CD4-positive, alpha-beta T cell (primary cell): ENCODE measurements at regions of chr3 and their contacts with region 1.

Region 1: DNA sequence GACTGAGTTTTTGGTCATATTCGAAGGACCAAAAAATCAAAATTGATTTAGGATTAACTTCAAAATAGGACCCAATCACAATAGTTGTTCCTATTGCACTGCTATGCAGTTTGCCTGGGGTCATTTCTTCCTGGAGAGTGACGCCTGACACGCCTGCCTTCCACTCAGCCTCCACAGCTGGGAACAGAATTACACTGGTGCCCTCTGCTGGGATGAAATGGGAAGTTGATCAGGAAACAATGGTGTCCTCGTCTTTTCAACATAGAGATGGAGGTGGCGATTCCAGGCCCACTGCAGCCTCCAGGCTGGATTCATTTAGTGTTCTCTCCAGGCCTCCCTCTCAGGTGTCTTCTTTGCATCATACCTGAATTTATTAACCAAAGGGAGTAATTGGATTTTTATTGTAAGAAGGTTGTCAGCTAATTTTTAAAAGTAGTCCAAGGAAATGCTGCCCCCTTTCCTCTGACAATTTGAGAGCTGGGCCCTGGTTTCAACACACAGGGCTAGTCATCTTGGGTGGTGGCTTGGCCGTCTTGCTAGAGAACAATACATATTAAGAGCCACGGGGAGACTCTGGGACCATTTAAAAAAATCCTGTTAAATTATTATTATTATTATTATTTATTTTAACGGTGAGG is 69.7 kb downstream of the GAP43 start:
- DNase-seq: peak; percentile 37 to 79 (median 49)
- ATAC-seq: peak; percentile 86
- H3K4me3 ChIP-seq: no peak overlapping the region
- H3K4me3 Mint-ChIP-seq: no peak overlapping the region
- H3K27ac ChIP-seq: no peak overlapping the region
- H3K27ac Mint-ChIP-seq: no peak overlapping the region
- H3K4me1 ChIP-seq: no peaks in the 10 kb centered on the region
- H3K4me1 Mint-ChIP-seq: no peaks in the 10 kb centered on the region
- H3K27me3 ChIP-seq: no peaks in the 10 kb centered on the region
- H3K27me3 Mint-ChIP-seq: peaks cover 7% of the 10 kb centered on the region
- CTCF ChIP-seq: peak; percentile 85

Region 2: GRCh38 chr3:114389156-114389555 is 1303.8 kb before region 1 on chr3:
- CTCF ChIA-PET with region 1: no interaction called
- POLR2A ChIA-PET with region 1: no interaction called
- intact Hi-C with region 1: loop called (anchors 5 to 10 kb)
- DNase-seq: peak in 7 of 14 experiments; percentile 1 to 76 (median 32)
- ATAC-seq: peak; percentile 58
- H3K4me3 ChIP-seq: no peak overlapping the region
- H3K4me3 Mint-ChIP-seq: peak overlapping the region; percentile 35
- H3K27ac ChIP-seq: no peak overlapping the region
- H3K27ac Mint-ChIP-seq: peak overlapping the region; percentile 60
- H3K4me1 ChIP-seq: peaks cover 15% of the 10 kb centered on the region
- H3K4me1 Mint-ChIP-seq: peaks cover 51% of the 10 kb centered on the region
- H3K27me3 ChIP-seq: no peaks in the 10 kb centered on the region
- H3K27me3 Mint-ChIP-seq: no peaks in the 10 kb centered on the region
- CTCF ChIP-seq: no peak

Region 3: DNA sequence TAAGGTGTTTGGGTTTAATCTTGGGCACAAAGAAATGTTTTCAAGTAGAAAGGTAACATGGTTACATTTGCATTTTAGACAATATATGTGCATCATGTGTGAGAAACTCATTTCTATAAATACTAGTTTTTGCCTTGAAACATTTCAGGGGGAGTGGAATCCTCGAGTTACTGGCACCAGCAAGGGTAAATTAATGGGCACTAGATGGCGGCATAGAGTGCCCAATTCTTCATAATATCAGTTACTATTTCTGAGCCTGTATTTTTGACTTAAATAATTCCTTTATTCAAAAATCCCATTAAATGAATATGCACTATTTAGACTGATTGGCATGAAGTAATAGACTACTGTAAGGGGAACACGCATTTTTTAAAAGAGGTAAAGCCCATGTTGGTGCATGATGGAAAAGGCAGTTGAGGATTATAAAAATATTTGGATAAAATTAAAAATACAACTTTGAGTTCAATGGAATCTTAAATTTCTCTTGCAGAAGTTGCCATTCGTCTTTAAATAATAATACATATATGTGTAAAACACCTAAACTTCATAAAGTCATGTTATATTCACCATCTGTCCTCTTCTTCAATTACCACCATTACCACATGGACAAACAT is 652.2 kb before region 1 on chr3:
- CTCF ChIA-PET with region 1: interaction called, 3 read pairs
- POLR2A ChIA-PET with region 1: no interaction called
- intact Hi-C with region 1: loop called (anchors 1 to 2 kb)
- DNase-seq: peak in 13 of 14 experiments; percentile 3 to 66 (median 25)
- ATAC-seq: peak; percentile 60
- H3K4me3 ChIP-seq: no peak overlapping the region
- H3K4me3 Mint-ChIP-seq: no peak overlapping the region
- H3K27ac ChIP-seq: no peak overlapping the region
- H3K27ac Mint-ChIP-seq: no peak overlapping the region
- H3K4me1 ChIP-seq: no peaks in the 10 kb centered on the region
- H3K4me1 Mint-ChIP-seq: peaks cover 19% of the 10 kb centered on the region
- H3K27me3 ChIP-seq: no peaks in the 10 kb centered on the region
- H3K27me3 Mint-ChIP-seq: no peaks in the 10 kb centered on the region
- CTCF ChIP-seq: peak; percentile 83

Region 4: GRCh38 chr3:115169808-115170207 is 523.2 kb before region 1 on chr3:
- CTCF ChIA-PET with region 1: no interaction called
- POLR2A ChIA-PET with region 1: no interaction called
- intact Hi-C with region 1: loop called (anchors 5 to 10 kb)
- DNase-seq: peak in 2 of 14 experiments; percentile 29 to 41
- ATAC-seq: no peak
- H3K4me3 ChIP-seq: no peak overlapping the region
- H3K4me3 Mint-ChIP-seq: no peak overlapping the region
- H3K27ac ChIP-seq: no peak overlapping the region
- H3K27ac Mint-ChIP-seq: no peak overlapping the region
- H3K4me1 ChIP-seq: peaks cover 11% of the 10 kb centered on the region
- H3K4me1 Mint-ChIP-seq: peaks cover 13% of the 10 kb centered on the region
- H3K27me3 ChIP-seq: no peaks in the 10 kb centered on the region
- H3K27me3 Mint-ChIP-seq: no peaks in the 10 kb centered on the region
- CTCF ChIP-seq: peak; percentile 73

Region 5: DNA sequence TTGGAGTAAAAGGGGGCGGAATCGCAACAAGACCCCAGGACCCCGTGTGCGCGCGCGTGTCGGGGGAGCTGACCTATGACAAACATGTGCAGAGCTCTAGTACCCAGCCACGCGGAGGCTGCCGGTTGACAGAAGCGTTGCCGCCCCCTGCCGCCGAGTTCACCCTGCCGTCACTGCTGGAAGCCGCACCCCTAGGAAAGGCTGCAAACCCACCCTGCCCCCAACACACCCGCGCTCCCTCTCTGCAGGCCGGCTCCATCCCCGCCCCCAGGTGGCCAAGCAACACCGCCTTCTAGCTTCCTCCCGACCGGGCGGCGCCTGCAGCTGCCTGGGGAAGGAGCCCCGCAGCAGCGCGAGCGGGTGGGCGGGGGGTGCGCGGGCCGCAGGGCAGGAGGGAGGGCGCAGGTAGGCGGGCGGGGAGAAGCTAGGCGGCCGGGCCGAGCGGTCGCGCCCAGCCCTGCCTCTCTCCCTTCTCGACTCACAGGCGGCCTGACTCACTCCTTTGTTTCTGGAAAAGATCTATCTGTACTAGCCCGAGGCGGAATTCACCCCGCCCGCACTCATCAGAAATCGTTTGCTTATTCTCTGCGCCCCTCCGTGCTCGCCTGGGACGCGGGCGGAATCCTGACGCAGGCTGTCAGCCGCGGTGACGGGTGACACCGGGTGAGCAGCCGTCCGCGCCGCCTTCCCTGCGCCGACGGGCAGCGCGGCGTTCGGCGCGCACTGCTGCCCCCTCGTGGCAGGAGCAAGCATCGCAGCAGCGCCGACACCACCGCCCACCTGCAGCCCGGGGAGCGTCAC is 91.1 kb after region 1 on chr3:
- CTCF ChIA-PET with region 1: interaction called, 8 read pairs
- POLR2A ChIA-PET with region 1: interaction called, 6 read pairs
- intact Hi-C with region 1: loop called (anchors 5 to 10 kb)
- DNase-seq: peak; percentile 82 to 96 (median 90)
- ATAC-seq: peak; percentile 83
- H3K4me3 ChIP-seq: peak overlapping the region; percentile 72
- H3K4me3 Mint-ChIP-seq: peak overlapping the region; percentile 80
- H3K27ac ChIP-seq: peak overlapping the region; percentile 94
- H3K27ac Mint-ChIP-seq: peak overlapping the region; percentile 79
- H3K4me1 ChIP-seq: peaks cover 16% of the 10 kb centered on the region
- H3K4me1 Mint-ChIP-seq: peaks cover 10% of the 10 kb centered on the region
- H3K27me3 ChIP-seq: no peaks in the 10 kb centered on the region
- H3K27me3 Mint-ChIP-seq: no peaks in the 10 kb centered on the region
- CTCF ChIP-seq: peak; percentile 99